IMR-90 (cell line): ENCODE measurements at regions of chr11 and their contacts with region 1.

Region 1: DNA sequence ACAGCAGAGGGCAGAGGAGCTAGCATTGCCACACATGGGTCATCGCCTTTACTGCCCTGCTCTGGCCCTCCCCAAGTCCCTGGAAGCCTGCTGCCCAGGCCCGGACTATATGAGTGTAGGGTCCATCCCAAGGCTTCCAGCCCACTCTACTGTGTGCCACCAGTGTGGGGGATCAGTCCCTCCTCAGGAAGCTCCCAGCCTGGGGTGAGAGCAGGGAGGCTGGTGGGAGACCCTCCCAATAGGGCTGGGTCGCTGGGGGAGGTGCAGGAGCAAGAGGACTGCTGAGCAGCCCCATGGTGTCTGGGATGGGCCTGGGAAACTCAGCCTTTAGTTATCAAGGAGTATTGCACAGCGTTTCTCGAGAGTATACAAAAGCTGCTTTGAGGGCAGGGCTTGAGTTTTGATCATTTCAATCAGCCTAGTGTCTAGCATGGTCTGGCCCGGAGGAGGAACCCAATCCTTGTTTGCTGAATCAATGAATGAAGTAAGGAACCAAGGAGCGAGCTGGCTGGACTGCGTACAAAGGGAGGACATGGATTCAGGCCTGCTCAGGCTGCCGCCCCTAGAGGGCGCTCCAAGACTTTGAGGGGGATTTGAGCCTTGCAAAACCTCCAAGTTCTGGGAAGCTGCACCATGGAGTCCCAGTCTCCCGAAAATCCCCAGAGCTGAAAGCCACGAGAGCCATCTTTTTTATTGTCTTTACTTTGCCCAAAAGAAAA is 89.0 kb upstream of the PARVA start:
- DNase-seq: peak; percentile 94
- ATAC-seq: peak; percentile 21
- H3K4me3 ChIP-seq: no peak overlapping the region
- H3K27ac ChIP-seq: peak overlapping the region; percentile 97
- H3K4me1 ChIP-seq: peaks cover 34% of the 10 kb centered on the region
- H3K27me3 ChIP-seq: no peaks in the 10 kb centered on the region
- CTCF ChIP-seq: peak; percentile 99
- POLR2A ChIP-seq: no peak
- RAD21 ChIP-seq: peak; percentile 98

Region 2: DNA sequence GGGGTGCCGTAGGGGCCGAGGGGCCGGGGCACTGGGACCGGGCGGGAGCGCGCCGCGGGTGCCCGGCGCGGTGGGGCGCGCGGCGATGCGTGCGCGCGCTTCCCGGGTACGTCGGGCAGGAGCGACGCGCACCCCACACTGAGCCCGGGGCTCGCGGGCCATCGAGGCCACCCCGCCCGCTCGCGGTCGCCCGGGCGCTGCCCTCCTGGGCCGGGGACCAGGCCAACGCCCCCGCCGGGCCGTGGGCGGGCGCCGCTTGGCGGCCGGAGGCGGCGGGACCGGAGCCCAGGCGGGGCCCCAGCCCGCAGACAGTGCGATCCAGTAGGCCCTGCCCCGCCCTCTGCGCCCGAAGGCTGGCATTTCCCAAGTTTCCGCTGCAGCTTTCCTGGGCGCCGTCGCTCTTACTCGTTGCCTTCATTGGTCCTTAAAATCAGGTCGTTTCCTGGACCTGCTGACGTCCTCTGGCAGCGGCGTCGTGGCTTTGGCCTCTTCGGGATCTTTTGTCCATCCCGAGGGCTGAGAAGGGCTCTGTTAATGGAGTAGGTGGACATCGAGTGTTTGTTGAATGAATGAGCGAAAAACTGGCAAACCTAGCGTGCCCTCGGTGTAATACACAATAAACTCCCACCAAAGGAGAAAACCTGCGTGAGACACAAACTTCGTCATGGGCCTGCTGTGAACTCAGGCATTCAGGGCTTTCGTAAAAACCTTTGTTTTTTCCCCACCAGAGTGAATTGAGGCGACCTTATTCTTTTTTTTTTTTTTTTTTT is 89.6 kb after region 1 on chr11:
- CTCF ChIA-PET with region 1: no interaction called
- POLR2A ChIA-PET with region 1: interaction called, 3 read pairs
- dilution Hi-C with region 1: no loop called
- in situ Hi-C with region 1: no loop called
- intact Hi-C with region 1: loop called (anchors 5 kb)
- DNase-seq: peak; percentile 71
- ATAC-seq: peak; percentile 73
- H3K4me3 ChIP-seq: peak overlapping the region; percentile 96
- H3K27ac ChIP-seq: peak overlapping the region; percentile 100
- H3K4me1 ChIP-seq: peaks cover 15% of the 10 kb centered on the region
- H3K27me3 ChIP-seq: no peaks in the 10 kb centered on the region
- CTCF ChIP-seq: peak; percentile 36
- POLR2A ChIP-seq: peak; percentile 82
- RAD21 ChIP-seq: 0 out of 2 replicates have a peak, but pooled peaks have one; percentile 15

Region 3: DNA sequence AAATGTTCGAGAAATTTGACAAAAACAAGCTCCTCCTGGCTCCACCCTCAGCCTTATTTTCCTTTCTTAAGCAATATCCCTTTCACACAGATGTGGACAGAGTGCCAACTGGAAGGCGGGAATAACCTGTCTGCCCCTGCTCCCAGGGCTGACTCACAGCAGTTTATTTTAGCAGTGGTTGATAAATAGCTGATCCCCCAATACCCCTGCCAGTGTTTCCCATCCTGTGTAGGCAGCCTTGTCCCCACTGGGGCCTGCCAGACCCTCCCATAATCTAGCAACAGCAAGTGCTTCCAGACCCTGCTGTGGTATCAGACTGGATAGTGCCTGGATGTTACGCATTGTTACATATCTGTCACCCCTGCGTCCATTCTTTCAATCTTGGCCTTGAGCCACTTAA is 142.6 kb after region 1 on chr11:
- CTCF ChIA-PET with region 1: no interaction called
- POLR2A ChIA-PET with region 1: no interaction called
- dilution Hi-C with region 1: no loop called
- in situ Hi-C with region 1: no loop called
- intact Hi-C with region 1: loop called (anchors 5 kb)
- DNase-seq: peak; percentile 91
- ATAC-seq: peak; percentile 65
- H3K4me3 ChIP-seq: no peak overlapping the region
- H3K27ac ChIP-seq: peak overlapping the region; percentile 71
- H3K4me1 ChIP-seq: peaks cover 40% of the 10 kb centered on the region
- H3K27me3 ChIP-seq: no peaks in the 10 kb centered on the region
- CTCF ChIP-seq: no peak
- POLR2A ChIP-seq: no peak
- RAD21 ChIP-seq: no peak

Region 4: DNA sequence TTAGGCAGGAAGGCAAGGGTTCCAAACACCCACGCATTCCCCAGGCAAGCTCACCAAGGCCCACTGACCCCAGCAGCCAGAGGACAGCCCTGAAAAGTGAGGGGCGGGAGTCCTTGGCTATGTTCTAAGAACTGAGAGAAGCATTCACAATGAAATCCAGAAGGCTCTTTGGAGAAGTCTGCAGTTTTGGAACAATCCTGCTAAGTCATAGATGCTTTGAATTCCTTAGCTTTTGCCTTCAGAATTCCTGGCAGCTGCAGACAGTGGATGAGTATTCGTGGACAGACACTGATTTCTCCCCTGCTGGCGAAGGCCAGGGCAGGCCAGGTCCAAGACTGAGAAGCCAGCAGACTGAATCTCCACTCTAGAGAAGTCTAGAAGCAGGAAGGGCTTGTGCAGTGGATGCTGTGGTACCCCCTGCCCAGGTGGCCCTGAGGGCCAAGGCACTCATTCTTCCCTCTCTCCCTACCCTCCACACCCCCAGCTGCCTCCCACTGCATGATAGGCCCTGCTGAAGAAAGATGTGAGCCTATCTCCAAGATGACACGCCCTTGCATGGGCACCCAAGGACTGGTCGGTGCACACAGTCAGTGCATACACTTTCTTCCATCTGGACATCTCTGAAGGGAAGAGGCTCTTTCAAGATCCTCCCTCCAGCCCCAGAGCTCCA is 252.7 kb after region 1 on chr11:
- CTCF ChIA-PET with region 1: no interaction called
- POLR2A ChIA-PET with region 1: interaction called, 3 read pairs
- dilution Hi-C with region 1: no loop called
- in situ Hi-C with region 1: no loop called
- intact Hi-C with region 1: loop called (anchors 1 kb)
- DNase-seq: peak; percentile 94
- ATAC-seq: peak; percentile 71
- H3K4me3 ChIP-seq: no peak overlapping the region
- H3K27ac ChIP-seq: peak overlapping the region; percentile 95
- H3K4me1 ChIP-seq: peaks cover 45% of the 10 kb centered on the region
- H3K27me3 ChIP-seq: no peaks in the 10 kb centered on the region
- CTCF ChIP-seq: peak; percentile 42
- POLR2A ChIP-seq: no peak; the same call in 1 of the 2 replicates
- RAD21 ChIP-seq: peak; percentile 49

Region 5: DNA sequence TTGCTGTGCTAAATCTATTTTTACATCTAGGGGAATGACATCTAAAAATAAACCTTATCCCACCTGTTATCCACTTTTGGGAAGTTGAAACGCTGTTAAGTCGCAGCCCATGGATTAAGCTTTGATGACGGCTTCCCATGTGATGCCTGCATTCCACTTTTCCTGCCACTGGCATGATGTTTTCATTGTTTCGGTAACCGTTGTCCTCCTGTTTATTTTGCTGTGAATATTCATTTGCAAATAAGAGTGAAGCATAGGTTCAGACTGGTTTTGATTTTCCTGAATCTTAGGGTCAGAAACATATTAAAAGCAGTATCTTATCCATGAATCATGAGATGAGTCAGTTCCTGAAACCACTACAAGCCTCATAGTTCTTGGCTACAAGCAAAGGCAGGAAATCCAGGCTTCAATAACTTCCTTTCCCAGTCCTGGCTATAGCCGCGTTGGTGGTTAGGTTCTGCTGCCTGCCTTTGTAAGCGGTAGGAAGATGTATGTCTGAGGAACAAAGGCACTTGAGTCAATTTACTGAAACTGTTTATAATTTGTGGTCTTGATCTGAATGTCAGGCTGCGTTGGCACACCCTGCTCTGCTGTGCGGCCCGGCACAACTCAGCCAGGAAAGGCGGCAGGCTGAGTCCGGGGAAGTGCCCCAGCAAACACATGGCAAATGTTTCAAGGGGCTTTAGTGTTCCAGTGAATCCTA is 405.3 kb after region 1 on chr11:
- CTCF ChIA-PET with region 1: interaction called, 6 read pairs
- POLR2A ChIA-PET with region 1: no interaction called
- dilution Hi-C with region 1: no loop called
- in situ Hi-C with region 1: no loop called
- intact Hi-C with region 1: loop called (anchors 5 kb)
- DNase-seq: peak; percentile 99
- ATAC-seq: peak; percentile 76
- H3K4me3 ChIP-seq: peak overlapping the region; percentile 0; the same call in 1 of the 2 replicates
- H3K27ac ChIP-seq: peak overlapping the region; percentile 76
- H3K4me1 ChIP-seq: peaks cover 45% of the 10 kb centered on the region
- H3K27me3 ChIP-seq: no peaks in the 10 kb centered on the region
- CTCF ChIP-seq: no peak
- POLR2A ChIP-seq: peak; percentile 83
- RAD21 ChIP-seq: peak; percentile 10; the same call in 1 of the 2 replicates

Region 6: GRCh38 chr11:12888525-12889158 is 600.3 kb after region 1 on chr11:
- CTCF ChIA-PET with region 1: interaction called, 19 read pairs
- POLR2A ChIA-PET with region 1: no interaction called
- dilution Hi-C with region 1: no loop called
- in situ Hi-C with region 1: no loop called
- intact Hi-C with region 1: no loop called
- DNase-seq: peak; percentile 90
- ATAC-seq: peak; percentile 75
- H3K4me3 ChIP-seq: no peak overlapping the region
- H3K27ac ChIP-seq: peak overlapping the region; percentile 60; the same call in 1 of the 2 replicates
- H3K4me1 ChIP-seq: peaks cover 22% of the 10 kb centered on the region
- H3K27me3 ChIP-seq: no peaks in the 10 kb centered on the region
- CTCF ChIP-seq: peak; percentile 83
- POLR2A ChIP-seq: 0 out of 2 replicates have a peak, but pooled peaks have one; percentile 22
- RAD21 ChIP-seq: peak; percentile 81

Region 7: DNA sequence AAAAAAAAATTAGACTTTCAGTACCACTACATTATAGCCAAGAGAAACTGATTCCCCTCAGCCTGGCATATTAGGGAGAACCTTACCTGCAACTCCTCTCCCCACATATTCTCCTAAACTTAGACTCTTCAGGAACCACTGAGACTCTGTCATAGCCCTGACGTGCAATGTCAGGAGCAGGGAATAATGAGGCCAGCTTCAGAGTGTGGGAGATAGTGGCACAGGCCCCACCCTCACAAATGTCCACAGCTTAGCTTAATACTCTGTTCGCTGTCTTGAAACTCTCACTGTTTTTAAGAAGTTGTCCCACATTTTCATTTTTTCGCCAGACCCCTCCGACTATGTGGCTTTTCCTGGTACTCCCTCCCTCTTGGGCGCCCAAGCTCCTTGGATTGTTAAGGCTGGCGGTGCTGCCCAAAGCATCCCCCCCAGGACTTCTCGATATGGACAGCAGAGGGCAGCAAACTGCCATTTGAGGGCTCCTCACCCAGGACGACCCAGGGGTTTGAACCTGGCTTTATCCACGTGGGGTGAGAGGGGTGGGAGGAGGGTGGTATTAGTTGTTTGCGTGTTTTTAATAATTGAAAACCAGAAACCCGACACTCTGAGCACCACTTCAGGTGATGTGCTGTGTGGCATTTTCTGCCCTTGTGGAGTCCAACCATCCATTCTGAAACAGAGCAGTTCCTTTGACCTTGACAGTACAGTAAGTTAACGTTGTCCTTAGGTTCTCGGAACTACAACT is 675.6 kb after region 1 on chr11:
- CTCF ChIA-PET with region 1: no interaction called
- POLR2A ChIA-PET with region 1: no interaction called
- dilution Hi-C with region 1: no loop called
- in situ Hi-C with region 1: no loop called
- intact Hi-C with region 1: loop called (anchors 5 kb)
- DNase-seq: peak; percentile 48
- ATAC-seq: peak; percentile 99
- H3K4me3 ChIP-seq: no peak overlapping the region
- H3K27ac ChIP-seq: no peak overlapping the region
- H3K4me1 ChIP-seq: no peaks in the 10 kb centered on the region
- H3K27me3 ChIP-seq: peaks cover 32% of the 10 kb centered on the region
- CTCF ChIP-seq: peak; percentile 95
- POLR2A ChIP-seq: no peak
- RAD21 ChIP-seq: peak; percentile 96